Aorta (tissue), 5 donors: ENCODE measurements at regions of chr1 and their contacts with region 1.

Region 1: DNA sequence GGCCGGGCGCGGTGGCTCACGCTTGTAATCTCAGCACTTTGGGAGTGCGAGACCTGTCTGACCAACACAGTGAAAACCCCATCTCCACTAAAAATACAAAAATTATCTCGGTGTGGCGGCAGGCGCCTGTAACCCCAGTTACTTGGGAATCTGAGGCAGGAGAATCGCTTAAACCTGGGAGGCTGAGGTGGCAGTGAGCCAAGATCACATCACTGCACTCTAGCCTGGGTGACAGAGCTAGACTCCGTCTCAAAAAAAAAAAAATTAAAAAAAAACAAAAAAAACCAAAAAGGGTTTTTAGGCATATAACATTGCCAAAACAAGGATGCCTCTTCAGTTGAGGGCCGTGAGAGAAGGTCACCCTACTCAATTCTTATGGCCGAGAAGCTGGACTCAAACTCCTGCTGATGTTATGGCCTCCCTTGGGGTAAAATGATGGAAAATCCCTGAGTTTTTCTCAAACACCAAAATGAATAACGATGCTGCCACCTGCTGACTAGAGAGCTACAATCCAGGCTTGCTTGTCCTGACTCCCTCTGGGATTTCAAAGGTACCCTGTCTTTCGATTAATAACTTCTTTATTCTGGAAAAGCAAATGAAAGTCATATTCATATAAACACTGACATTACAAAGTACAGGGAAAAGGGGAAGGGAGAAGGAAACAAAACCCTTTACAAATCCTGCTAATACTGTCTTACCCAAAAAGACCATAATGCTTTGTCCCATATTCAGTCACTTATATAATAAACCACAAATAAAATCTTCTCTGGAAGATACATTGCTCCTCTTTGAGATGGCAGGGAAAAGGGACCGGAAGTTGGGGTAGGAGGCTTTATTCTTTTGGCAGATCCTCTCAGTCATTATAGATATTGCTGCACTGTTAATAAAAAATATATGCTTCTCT is 10.7 kb downstream of the RAB42 start:
- DNase-seq: peak in 1 of 2 donors; percentile 69
- ATAC-seq: peak; percentile 82
- H3K4me3 ChIP-seq: no peak overlapping the region
- H3K27ac ChIP-seq: no peak overlapping the region
- H3K4me1 ChIP-seq: no peaks in the 10 kb centered on the region
- H3K27me3 ChIP-seq: no peaks in the 10 kb centered on the region

Region 2: GRCh38 chr1:28359592-28360239 is 243.1 kb before region 1 on chr1:
- intact Hi-C with region 1: loop called (anchors 2 to 10 kb)
- DNase-seq: peak; percentile 75 to 92
- ATAC-seq: no peak
- H3K4me3 ChIP-seq: no peak overlapping the region
- H3K27ac ChIP-seq: no peak overlapping the region
- H3K4me1 ChIP-seq: no peaks in the 10 kb centered on the region
- H3K27me3 ChIP-seq: no peaks in the 10 kb centered on the region

Region 3: DNA sequence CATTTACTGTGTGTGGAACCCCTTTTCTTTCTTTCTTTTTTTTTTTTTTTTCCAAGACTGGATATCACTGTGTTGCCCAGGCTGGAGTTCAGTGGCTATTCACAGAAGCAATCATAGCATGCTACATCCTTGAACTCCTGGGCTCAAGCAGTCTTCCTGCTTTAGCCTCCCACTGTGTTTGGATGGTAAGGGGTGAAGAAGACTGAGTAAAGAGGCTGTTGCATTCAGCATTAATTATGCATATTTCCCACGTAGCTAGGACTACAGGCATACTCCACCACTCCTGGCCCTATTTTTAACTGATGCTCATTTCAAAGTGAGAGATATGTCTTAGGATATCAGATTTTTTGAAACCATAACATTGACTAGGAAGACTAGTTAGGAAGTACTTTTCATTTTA is 193.7 kb before region 1 on chr1:
- intact Hi-C with region 1: loop called (anchors 2 to 10 kb)
- DNase-seq: no peak
- ATAC-seq: no peak
- H3K4me3 ChIP-seq: no peak overlapping the region
- H3K27ac ChIP-seq: no peak overlapping the region
- H3K4me1 ChIP-seq: no peaks in the 10 kb centered on the region
- H3K27me3 ChIP-seq: no peaks in the 10 kb centered on the region

Region 4: GRCh38 chr1:28417429-28417922 is 185.3 kb before region 1 on chr1:
- intact Hi-C with region 1: loop called in 1 of 2 experiments (anchors 10 kb)
- DNase-seq: no peak
- ATAC-seq: no peak
- H3K4me3 ChIP-seq: no peak overlapping the region
- H3K27ac ChIP-seq: no peak overlapping the region
- H3K4me1 ChIP-seq: no peaks in the 10 kb centered on the region
- H3K27me3 ChIP-seq: no peaks in the 10 kb centered on the region

Region 5: GRCh38 chr1:28518000-28518744 is 84.6 kb before region 1 on chr1:
- intact Hi-C with region 1: loop called (anchors 2 kb)
- DNase-seq: peak; percentile 92 to 97
- ATAC-seq: peak; percentile 97
- H3K4me3 ChIP-seq: peak overlapping the region; percentile 20 to 38
- H3K27ac ChIP-seq: peak overlapping the region in 1 of 2 donors; percentile 25
- H3K4me1 ChIP-seq: no peaks in the 10 kb centered on the region
- H3K27me3 ChIP-seq: no peaks in the 10 kb centered on the region

Region 6: DNA sequence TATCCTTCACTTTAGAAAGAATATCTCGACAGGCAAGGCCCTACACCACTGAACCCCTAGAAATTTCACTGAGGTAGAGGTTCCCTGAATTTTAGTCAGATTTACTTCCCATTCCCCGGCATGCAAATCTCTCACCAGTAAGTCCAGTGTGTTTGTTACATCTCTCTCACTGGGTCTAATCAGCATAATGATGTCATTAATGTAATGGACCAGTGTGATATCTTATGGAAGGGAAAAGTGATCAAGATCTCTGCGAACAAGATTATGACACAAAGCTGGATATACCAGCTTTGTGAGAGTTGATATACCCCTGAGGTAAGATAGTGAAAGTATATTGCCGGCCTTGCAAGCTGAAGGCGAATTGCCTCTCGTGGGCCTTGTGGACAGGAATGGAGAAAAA is 53.5 kb after region 1 on chr1:
- intact Hi-C with region 1: no loop called
- DNase-seq: no peak
- ATAC-seq: no peak
- H3K4me3 ChIP-seq: no peak overlapping the region
- H3K27ac ChIP-seq: no peak overlapping the region
- H3K4me1 ChIP-seq: no peaks in the 10 kb centered on the region
- H3K27me3 ChIP-seq: no peaks in the 10 kb centered on the region